Common myeloid progenitor, CD34-positive (primary cell): ENCODE measurements at regions of chr19 and their contacts with region 1.

Region 1: GRCh38 chr19:50724522-50725217 is 1.5 kb downstream of the CLEC11A start:
- DNase-seq: peak; percentile 99 to 100 (median 99)
- H3K4me3 ChIP-seq: peak overlapping the region; percentile 54 to 87 (median 68)
- H3K27ac ChIP-seq: peak overlapping the region in 1 of 2 experiments; percentile 78
- H3K4me1 ChIP-seq: peaks cover 5 to 61% (median 36%) of the 10 kb centered on the region in 4 experiments
- H3K27me3 ChIP-seq: peaks cover 0 to 44% (median 26%) of the 10 kb centered on the region in 5 experiments

Region 2: GRCh38 chr19:50639121-50640112 is 85.3 kb before region 1 on chr19 and contains the start of gene SYT3:
- CTCF ChIA-PET with region 1: no interaction called
- POLR2A ChIA-PET with region 1: no interaction called
- DNase-seq: peak; percentile 49 to 67 (median 62)
- H3K4me3 ChIP-seq: peak within 1 kb of the TSS in 5 of 7 experiments; percentile 27 to 76 (median 63)
- H3K27ac ChIP-seq: no peak within 1 kb of the TSS
- H3K4me1 ChIP-seq: peaks cover 0 to 9% (median 5%) of the 10 kb centered on the region in 4 experiments
- H3K27me3 ChIP-seq: peaks cover 2 to 67% (median 14%) of the 10 kb centered on the region in 5 experiments

Region 3: DNA sequence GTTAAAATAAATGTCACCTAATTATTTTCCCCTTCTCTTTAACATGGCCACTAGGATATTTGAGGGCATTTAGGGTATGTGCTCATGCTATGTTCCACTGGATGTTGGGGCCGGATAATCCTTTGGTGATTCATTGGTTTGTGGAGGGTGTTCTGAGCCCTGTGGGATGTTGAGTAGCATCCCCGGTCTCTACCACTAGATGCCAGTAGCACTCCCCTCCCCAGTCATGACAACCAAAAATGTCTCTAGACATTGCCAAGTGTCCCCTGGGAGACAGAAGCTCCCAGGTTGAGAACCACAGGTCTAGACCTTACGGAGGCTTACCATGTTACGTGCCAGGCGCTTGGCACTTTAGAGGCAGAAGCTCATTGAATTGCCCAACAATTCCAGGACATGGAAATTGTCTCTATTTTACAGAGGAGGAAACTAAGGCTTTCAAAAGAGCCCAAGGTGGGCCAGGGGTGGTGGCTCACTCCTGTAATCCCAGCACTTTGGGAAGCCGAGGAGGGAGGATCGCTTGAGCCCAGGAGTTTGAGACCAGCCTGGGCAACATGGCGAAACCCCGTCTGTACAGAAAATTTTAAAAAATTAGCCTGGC is 19.1 kb before region 1 on chr19:
- CTCF ChIA-PET with region 1: interaction called, 11 read pairs
- POLR2A ChIA-PET with region 1: no interaction called
- DNase-seq: peak; percentile 67 to 82 (median 82)
- H3K4me3 ChIP-seq: no peak overlapping the region
- H3K27ac ChIP-seq: no peak overlapping the region
- H3K4me1 ChIP-seq: peaks cover 0 to 16% (median 7%) of the 10 kb centered on the region in 4 experiments
- H3K27me3 ChIP-seq: peaks cover 0 to 48% (median 11%) of the 10 kb centered on the region in 5 experiments

Region 4: GRCh38 chr19:50712833-50713232 is 11.8 kb before region 1 on chr19:
- CTCF ChIA-PET with region 1: interaction called, 11 read pairs
- POLR2A ChIA-PET with region 1: no interaction called
- DNase-seq: peak in 2 of 3 donors; percentile 51 to 61
- H3K4me3 ChIP-seq: no peak overlapping the region
- H3K27ac ChIP-seq: no peak overlapping the region
- H3K4me1 ChIP-seq: peaks cover 0 to 17% (median 8%) of the 10 kb centered on the region in 4 experiments
- H3K27me3 ChIP-seq: peaks cover 0 to 36% (median 15%) of the 10 kb centered on the region in 5 experiments